Dorsolateral prefrontal cortex (tissue), 120 donors: ENCODE measurements at regions of chr20 and their contacts with region 1.

Region 1: DNA sequence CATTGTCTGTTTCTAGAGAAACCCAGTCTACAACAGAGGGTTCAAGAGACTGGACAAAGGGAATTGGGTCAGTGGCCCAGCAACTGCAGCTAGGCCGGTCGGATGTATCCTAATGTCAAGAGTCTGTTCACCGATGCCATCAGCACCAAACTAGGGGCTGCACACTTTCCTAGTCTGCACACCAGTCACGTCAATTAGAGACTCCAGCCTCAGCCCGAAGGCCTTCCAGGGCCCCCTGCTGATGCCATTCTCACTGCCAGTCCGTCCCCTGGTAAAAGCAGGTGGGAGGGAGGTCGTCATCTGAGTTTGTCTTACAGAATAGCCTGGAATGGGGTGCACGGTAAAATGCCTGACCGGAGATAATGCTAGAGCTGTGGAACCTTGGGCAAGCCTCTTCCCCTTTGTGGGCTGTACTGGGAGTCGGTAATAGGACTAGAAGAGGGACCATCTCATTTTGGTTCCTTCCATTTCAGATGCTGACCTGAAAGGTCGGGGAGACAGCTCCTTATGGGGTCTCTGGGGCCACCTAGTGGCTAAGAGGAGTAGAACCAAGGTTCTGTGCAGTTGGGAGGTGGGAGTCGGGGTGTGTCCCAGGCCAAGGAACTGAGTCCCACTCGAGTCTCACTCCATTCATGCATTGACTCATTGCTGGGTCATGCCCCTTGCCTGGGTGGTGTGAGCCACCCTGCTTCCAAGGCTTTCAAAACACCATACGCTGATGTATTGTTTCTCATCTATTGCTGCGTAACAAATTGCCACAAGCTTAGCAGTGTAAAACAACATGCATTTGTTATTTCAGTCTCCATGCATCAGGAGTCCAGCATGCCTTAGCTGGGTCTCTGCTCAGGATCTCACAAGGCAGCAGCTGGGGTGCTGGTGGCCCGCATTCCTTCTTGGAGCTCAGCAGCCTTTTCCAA is 5.1 kb downstream of the SOX12 start:
- DNase-seq: peak in 6 of 10 donors; percentile 56 to 68 (median 60)
- H3K4me3 ChIP-seq: peak overlapping the region in 11 of 59 donors; percentile 0 to 31 (median 10)
- H3K27ac ChIP-seq: peak overlapping the region in 56 of 59 donors; percentile 1 to 99 (median 73)
- H3K27me3 ChIP-seq: no peaks in the 10 kb centered on the region
- CTCF ChIP-seq: peak; percentile 67 to 96 (median 87)

Region 2: DNA sequence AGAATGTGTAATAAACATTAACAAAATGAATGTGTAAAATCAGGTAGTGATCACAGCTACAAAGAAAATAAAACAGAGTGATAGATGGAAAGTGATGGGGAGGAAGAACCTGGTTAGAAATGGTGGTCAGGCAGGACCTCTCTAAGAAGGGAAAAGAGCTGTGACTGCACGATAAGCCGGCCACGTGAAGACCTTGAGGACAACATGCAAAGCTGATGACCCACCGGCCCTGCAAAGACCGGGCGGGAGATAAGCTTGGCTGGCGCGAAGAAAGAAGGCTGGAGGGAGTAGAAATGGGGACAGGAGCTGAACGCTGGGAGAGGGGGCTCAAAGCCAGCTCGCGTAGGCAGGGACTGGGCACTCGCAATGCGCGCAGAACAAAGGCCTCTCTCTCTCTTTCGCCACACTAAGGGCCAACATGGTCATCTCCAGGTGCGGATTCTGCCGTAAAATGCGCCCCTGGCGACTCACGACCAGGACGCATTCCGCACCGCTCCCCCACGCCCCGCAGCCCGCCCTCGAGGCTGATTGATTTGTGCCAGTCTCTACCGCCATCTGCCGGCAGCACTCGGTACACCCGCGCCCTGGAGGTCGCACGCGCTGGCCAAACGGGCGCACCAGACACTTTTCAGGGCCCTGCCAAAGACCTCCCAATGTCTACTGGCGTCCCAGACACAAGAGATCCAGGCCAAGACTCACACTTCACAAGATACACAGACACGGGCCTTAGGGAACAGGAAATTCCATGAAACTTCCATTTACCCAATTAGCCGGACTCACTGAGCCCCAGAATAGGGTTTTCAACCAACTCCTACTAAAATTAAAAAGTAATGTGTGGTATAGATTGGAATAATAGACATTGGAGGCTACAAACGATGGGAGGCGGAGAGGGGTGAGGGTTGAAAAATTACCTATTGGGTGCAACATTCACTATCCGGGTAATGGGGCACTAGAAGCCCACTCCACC is 63.6 kb before region 1 on chr20:
- intact Hi-C with region 1: loop called in 1 of 2 experiments (anchors 2 kb)
- DNase-seq: peak; percentile 77 to 90 (median 84)
- H3K4me3 ChIP-seq: peak overlapping the region; percentile 40 to 77 (median 64)
- H3K27ac ChIP-seq: peak overlapping the region in 30 of 59 donors; percentile 4 to 82 (median 49)
- H3K27me3 ChIP-seq: no peaks in the 10 kb centered on the region
- CTCF ChIP-seq: peak; percentile 89 to 99 (median 98)

Region 3: DNA sequence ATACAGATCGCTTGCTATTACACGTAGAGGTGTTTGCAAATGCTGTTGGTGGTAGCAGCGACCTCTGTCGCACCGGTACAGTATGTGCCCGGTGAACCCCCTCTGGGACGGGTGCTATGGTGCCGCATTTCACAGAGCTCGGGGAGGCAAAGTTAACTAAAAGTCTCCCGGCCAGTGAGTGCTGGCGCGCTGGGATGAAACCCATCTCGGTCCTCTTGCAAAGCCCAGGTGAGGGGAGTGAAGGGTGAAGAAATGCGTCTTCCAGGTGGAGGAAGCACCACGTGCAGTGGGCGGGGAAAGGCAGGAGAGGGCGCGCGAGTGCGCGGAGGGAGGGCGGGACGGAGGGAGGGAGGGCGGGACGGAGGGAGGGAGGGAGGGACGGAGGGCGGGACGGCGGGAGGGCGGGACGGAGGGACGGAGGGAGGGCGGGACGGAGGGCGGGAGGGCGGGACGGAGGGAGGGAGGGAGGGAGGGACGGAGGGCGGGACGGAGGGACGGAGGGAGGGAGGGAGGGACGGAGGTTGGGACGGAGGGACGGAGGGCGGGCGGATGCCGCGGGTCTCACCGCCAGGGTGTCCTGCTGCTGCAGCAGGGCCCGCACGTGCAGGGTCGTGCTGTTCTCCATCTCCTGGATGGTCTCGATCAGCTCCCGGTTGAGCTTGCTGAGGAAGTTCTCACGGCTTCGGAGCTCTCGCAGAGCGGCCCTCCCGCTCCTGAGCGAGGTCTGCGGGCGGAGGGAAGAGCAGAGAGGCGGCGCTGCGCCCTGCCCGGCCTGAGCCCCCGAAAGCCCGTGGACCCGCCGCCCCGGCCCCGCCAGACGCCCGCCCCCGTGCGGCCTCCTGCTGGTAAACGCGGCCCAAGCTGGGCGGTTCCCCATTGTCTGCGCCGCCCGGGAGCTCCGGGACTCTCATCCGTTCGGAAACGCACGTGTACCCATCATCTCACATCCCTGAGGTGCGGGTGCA is 51.6 kb before region 1 on chr20:
- intact Hi-C with region 1: loop called in 1 of 2 experiments (anchors 5 kb)
- DNase-seq: peak in 1 of 10 donors; percentile 45
- H3K4me3 ChIP-seq: peak overlapping the region in 49 of 59 donors; percentile 7 to 59 (median 42)
- H3K27ac ChIP-seq: no peak overlapping the region
- H3K27me3 ChIP-seq: no peaks in the 10 kb centered on the region
- CTCF ChIP-seq: peak in 15 of 56 donors; percentile 7 to 35 (median 19)

Region 4: GRCh38 chr20:391041-391711 is 60.7 kb after region 1 on chr20:
- intact Hi-C with region 1: no loop called
- DNase-seq: no peak
- H3K4me3 ChIP-seq: no peak overlapping the region
- H3K27ac ChIP-seq: no peak overlapping the region
- H3K27me3 ChIP-seq: no peaks in the 10 kb centered on the region
- CTCF ChIP-seq: no peak